ENCODE measurements at regions of chr2 and their contacts with region 1.

Region 1: GRCh38 chr2:214310319-214310718 is 100.5 kb upstream of the VWC2L start:
- DNase-seq: peak; percentile 12
- H3K4me3 ChIP-seq: no peak overlapping the region
- H3K27ac ChIP-seq: no peak overlapping the region
- H3K4me1 ChIP-seq: peaks cover 13% of the 10 kb centered on the region
- H3K27me3 ChIP-seq: no peaks in the 10 kb centered on the region
- CTCF ChIP-seq: peak; percentile 20 to 64

Region 2: GRCh38 chr2:214203744-214204289 is 106.5 kb before region 1 on chr2:
- CTCF ChIA-PET with region 1: no interaction called
- dilution Hi-C with region 1: no loop called
- in situ Hi-C with region 1: no loop called
- intact Hi-C with region 1: no loop called
- DNase-seq: peak; percentile 77
- H3K4me3 ChIP-seq: no peak overlapping the region
- H3K27ac ChIP-seq: no peak overlapping the region
- H3K4me1 ChIP-seq: peaks cover 15% of the 10 kb centered on the region
- H3K27me3 ChIP-seq: no peaks in the 10 kb centered on the region
- CTCF ChIP-seq: no peak

Region 3: GRCh38 chr2:214410918-214411554 is 100.7 kb after region 1 on chr2 and contains the start of gene VWC2L:
- CTCF ChIA-PET with region 1: no interaction called
- dilution Hi-C with region 1: no loop called
- in situ Hi-C with region 1: no loop called
- intact Hi-C with region 1: loop called (anchors 2 kb)
- DNase-seq: peak; percentile 73
- H3K4me3 ChIP-seq: no peak within 1 kb of the TSS
- H3K27ac ChIP-seq: no peak within 1 kb of the TSS
- H3K4me1 ChIP-seq: no peaks in the 10 kb centered on the region
- H3K27me3 ChIP-seq: no peaks in the 10 kb centered on the region
- CTCF ChIP-seq: no peak
- total RNA-seq, gene VWC2L: not detected

Region 4: GRCh38 chr2:214587442-214587841 is 277.1 kb after region 1 on chr2:
- CTCF ChIA-PET with region 1: no interaction called
- dilution Hi-C with region 1: no loop called
- in situ Hi-C with region 1: no loop called
- intact Hi-C with region 1: loop called (anchors 1 kb)
- DNase-seq: no peak
- H3K4me3 ChIP-seq: no peak overlapping the region
- H3K27ac ChIP-seq: no peak overlapping the region
- H3K4me1 ChIP-seq: no peaks in the 10 kb centered on the region
- H3K27me3 ChIP-seq: no peaks in the 10 kb centered on the region
- CTCF ChIP-seq: peak; percentile 48 to 56

Region 5: GRCh38 chr2:214809751-214810564 is 499.6 kb after region 1 on chr2:
- CTCF ChIA-PET with region 1: no interaction called
- dilution Hi-C with region 1: no loop called
- in situ Hi-C with region 1: no loop called
- intact Hi-C with region 1: loop called (anchors 10 kb)
- DNase-seq: peak; percentile 98
- H3K4me3 ChIP-seq: peak overlapping the region; percentile 81 to 99 (median 92)
- H3K27ac ChIP-seq: peak overlapping the region; percentile 87
- H3K4me1 ChIP-seq: peaks cover 24% of the 10 kb centered on the region
- H3K27me3 ChIP-seq: no peaks in the 10 kb centered on the region
- CTCF ChIP-seq: no peak

Measured in mammary epithelial cell (primary cell).